ENCODE measurements at regions of chr16 and their contacts with region 1.

Region 1: GRCh38 chr16:64751906-64752305 is 370.0 kb downstream of the CDH11 start:
- DNase-seq: no peak
- H3K4me3 ChIP-seq: no peak overlapping the region
- H3K4me3 Mint-ChIP-seq: no peak overlapping the region
- H3K27ac Mint-ChIP-seq: no peak overlapping the region
- H3K4me1 ChIP-seq: no peaks in the 10 kb centered on the region
- H3K4me1 Mint-ChIP-seq: no peaks in the 10 kb centered on the region
- H3K27me3 ChIP-seq: no peaks in the 10 kb centered on the region
- H3K27me3 Mint-ChIP-seq: peaks cover 8% of the 10 kb centered on the region
- CTCF ChIP-seq: no peak

Region 2: DNA sequence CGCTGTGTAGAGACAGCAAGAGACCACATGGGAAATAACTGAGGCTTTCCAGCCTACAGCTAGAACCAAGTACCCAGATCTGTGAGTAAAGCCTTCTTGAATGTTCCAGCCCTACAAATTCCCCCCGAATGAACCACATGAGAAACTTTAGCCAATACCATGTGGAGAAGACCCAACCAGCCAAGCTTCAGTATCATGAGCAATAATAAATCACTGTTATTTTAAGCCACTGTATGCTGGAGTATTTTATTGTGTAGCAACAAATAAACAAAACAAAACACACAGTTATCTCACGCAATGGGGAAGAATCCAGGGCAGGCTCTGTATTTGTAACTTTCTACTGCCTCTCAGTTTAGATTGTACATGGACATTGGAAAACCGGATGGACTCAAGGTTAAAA is 56.2 kb before region 1 on chr16:
- CTCF ChIA-PET with region 1: no interaction called
- POLR2A ChIA-PET with region 1: no interaction called
- intact Hi-C with region 1: loop called (anchors 10 kb)
- DNase-seq: no peak
- H3K4me3 ChIP-seq: no peak overlapping the region
- H3K4me3 Mint-ChIP-seq: no peak overlapping the region
- H3K27ac Mint-ChIP-seq: no peak overlapping the region
- H3K4me1 ChIP-seq: no peaks in the 10 kb centered on the region
- H3K4me1 Mint-ChIP-seq: no peaks in the 10 kb centered on the region
- H3K27me3 ChIP-seq: no peaks in the 10 kb centered on the region
- H3K27me3 Mint-ChIP-seq: peaks cover 3% of the 10 kb centered on the region
- CTCF ChIP-seq: no peak